ENCODE measurements at regions of chr5 and their contacts with region 1.

Region 1: DNA sequence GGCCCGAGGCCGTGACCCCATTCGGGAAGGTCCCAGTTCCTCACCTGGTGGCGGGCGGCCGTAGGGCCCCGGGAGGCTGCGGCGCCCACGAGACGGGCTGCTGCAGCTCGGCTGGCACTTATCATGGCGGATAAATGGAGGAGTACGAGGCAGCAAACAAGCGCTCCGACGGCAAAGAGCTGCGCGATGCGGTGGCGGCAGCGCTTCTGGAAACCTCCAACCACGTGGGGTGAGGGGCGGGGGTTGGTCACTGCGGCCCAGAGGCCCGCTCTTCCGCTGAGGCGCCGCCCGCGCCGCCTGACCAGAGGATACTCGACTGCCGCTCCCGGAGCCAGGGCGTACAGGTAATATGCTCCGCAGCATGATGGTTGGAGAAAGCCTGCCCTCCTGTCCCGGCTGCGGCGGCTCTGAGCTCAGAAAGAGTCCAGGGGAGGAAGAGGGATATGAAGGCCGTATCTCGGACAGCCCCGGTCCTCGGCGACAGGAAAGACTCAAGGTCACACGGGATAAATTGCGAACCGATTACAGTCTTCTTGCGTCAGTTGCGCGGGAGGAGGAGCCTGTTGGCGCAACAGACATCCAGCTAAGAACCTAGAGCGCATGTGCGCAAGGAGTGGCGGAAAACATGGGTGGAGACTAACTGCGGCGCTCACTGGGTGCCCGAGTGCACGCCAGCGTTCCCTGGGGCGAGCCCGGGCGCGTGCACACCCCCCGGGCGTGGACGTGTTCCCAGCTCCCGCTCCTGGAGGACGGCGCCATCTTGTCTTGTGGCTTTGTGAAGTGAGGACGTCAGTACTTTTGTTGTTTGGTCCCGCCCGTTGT is at the start of gene HSPA9:
- DNase-seq: peak; percentile 98
- H3K4me3 ChIP-seq: peak within 1 kb of the TSS; percentile 75 to 86
- H3K27ac ChIP-seq: peak within 1 kb of the TSS; percentile 97 to 98
- H3K4me1 ChIP-seq: peaks cover 2 to 10% of the 10 kb centered on the region in 2 experiments; a peak in 2 of 4 replicates
- H3K27me3 ChIP-seq: no peaks in the 10 kb centered on the region
- CTCF ChIP-seq: no peak
- EP300 ChIP-seq: 0 out of 4 replicates have a peak, but pooled peaks of 1 of the 2 experiments have one; percentile 13
- RAD21 ChIP-seq: no peak
- polyA plus RNA-seq, gene HSPA9: 153 and 196 TPM in 2 replicates

Region 2: GRCh38 chr5:138594305-138595058 is 19.1 kb after region 1 on chr5:
- CTCF ChIA-PET with region 1: interaction called, 46 read pairs
- POLR2A ChIA-PET with region 1: no interaction called
- DNase-seq: no peak
- H3K4me3 ChIP-seq: no peak overlapping the region; a peak in 1 of 4 replicates
- H3K27ac ChIP-seq: no peak overlapping the region
- H3K4me1 ChIP-seq: peaks cover 0 to 2% of the 10 kb centered on the region in 2 experiments; a peak in 1 of 4 replicates
- H3K27me3 ChIP-seq: peaks cover 5% of the 10 kb centered on the region; the same call in 1 of the 2 replicates
- CTCF ChIP-seq: peak; percentile 54
- EP300 ChIP-seq: no peak
- RAD21 ChIP-seq: no peak

Region 3: DNA sequence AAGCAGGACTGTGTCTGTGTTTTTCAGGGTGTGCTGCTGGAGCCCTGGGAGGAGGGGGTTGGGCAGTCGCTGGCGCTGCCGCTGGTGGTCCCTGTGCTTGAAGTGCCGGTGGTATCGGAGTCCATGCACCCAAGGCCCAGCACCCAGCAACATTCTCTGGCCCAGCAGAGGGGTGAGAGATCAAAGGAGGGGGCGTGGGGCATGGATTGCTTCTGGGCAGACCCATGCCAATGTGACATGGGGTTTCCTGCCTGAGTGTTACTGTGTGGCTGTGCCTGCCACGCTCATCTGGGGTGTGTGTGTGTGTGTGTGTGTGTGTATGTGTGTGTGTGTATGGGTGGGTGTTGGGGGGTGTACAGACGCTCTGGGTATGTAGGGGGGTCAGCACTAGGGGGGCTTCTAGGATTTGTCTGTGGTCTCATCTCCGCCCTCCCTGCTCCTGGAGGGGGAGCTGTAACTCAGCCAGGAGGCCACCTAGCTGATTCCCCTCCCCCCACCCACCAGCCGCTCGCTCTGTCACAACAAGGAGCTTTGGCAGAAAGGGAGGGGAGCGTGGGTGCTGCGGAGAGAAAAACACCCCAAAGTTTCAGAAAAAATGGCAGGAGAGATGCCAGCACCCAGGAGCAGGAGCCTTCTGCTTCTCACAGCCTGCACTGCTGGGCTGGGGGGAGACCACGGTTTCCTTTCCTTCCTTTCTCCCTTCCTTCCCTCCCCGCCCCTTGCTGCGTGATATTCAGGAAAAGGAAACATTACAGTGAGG is 35.7 kb after region 1 on chr5:
- CTCF ChIA-PET with region 1: interaction called, 42 read pairs
- POLR2A ChIA-PET with region 1: interaction called, 10 read pairs
- DNase-seq: peak; percentile 77
- H3K4me3 ChIP-seq: peak overlapping the region in 1 of 2 experiments; percentile 33; a peak in 2 of 4 replicates
- H3K27ac ChIP-seq: peak overlapping the region in 1 of 2 experiments; percentile 61; a peak in 2 of 4 replicates
- H3K4me1 ChIP-seq: peaks cover 0 to 31% of the 10 kb centered on the region in 2 experiments; a peak in 2 of 4 replicates
- H3K27me3 ChIP-seq: no peaks in the 10 kb centered on the region
- CTCF ChIP-seq: no peak
- EP300 ChIP-seq: no peak; a peak in 1 of 4 replicates
- RAD21 ChIP-seq: peak; percentile 48

Region 4: GRCh38 chr5:139262742-139263445 is 687.5 kb after region 1 on chr5:
- CTCF ChIA-PET with region 1: interaction called, 11 read pairs
- POLR2A ChIA-PET with region 1: interaction called, 3 read pairs
- DNase-seq: peak; percentile 87
- H3K4me3 ChIP-seq: no peak overlapping the region
- H3K27ac ChIP-seq: peak overlapping the region in 1 of 2 experiments; percentile 39; a peak in 1 of 4 replicates
- H3K4me1 ChIP-seq: peaks cover 0 to 9% of the 10 kb centered on the region in 2 experiments; a peak in 1 of 4 replicates
- H3K27me3 ChIP-seq: no peaks in the 10 kb centered on the region
- CTCF ChIP-seq: peak; percentile 93
- EP300 ChIP-seq: no peak
- RAD21 ChIP-seq: peak; percentile 100

Measured in SK-N-SH (cell line).